Mammary epithelial cell (primary cell): ENCODE measurements at regions of chr2 and their contacts with region 1.

Region 1: GRCh38 chr2:230160112-230160660 is 59.6 kb downstream of the SP110 start:
- DNase-seq: peak; percentile 37
- H3K4me3 ChIP-seq: no peak overlapping the region
- H3K27ac ChIP-seq: no peak overlapping the region
- H3K4me1 ChIP-seq: no peaks in the 10 kb centered on the region
- H3K27me3 ChIP-seq: no peaks in the 10 kb centered on the region
- CTCF ChIP-seq: peak; percentile 65 to 75

Region 2: DNA sequence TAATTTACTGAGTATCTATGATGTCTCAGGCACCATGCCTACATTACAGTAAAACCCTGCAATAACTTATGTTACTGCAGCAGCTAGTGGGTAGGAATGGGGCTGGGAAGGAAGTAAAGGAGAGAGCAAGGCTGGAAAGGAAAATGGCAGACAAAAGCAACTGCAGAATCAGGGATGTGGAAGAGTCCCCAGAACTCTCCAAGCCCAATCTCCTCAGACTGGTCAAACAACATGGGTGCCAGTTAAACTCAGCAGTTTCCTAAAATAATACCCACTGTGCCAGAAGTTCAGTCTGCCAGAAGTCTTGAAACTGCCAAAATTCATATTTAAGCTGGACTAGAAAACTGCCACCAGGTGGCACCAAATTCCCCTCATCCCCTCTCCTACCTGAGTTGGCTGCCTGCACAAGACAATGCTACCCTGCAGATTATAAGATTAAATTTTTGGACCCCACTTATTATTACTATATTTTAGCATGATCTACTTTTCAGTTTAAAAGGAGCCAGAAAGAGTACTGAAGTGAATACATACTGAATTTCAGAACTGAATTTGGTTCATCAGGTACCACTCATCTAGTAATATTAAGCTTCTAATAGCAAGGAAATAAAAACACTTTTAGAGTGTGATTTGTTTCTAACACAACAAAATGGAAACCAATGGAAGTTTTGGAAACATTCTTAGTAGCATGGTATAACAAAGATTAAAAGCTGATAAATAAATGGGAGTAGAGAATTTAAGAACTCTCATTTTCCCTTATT is 359.0 kb before region 1 on chr2:
- CTCF ChIA-PET with region 1: no interaction called
- dilution Hi-C with region 1: no loop called
- in situ Hi-C with region 1: no loop called
- intact Hi-C with region 1: loop called (anchors 5 kb)
- DNase-seq: peak; percentile 35
- H3K4me3 ChIP-seq: no peak overlapping the region
- H3K27ac ChIP-seq: peak overlapping the region; percentile 47
- H3K4me1 ChIP-seq: peaks cover 10% of the 10 kb centered on the region
- H3K27me3 ChIP-seq: no peaks in the 10 kb centered on the region
- CTCF ChIP-seq: peak; percentile 78 to 79

Region 3: GRCh38 chr2:230018153-230018552 is 142.0 kb before region 1 on chr2:
- CTCF ChIA-PET with region 1: interaction called, 22 read pairs
- dilution Hi-C with region 1: no loop called
- in situ Hi-C with region 1: no loop called
- intact Hi-C with region 1: no loop called
- DNase-seq: peak; percentile 72
- H3K4me3 ChIP-seq: no peak overlapping the region
- H3K27ac ChIP-seq: no peak overlapping the region
- H3K4me1 ChIP-seq: no peaks in the 10 kb centered on the region
- H3K27me3 ChIP-seq: no peaks in the 10 kb centered on the region
- CTCF ChIP-seq: no peak

Region 4: DNA sequence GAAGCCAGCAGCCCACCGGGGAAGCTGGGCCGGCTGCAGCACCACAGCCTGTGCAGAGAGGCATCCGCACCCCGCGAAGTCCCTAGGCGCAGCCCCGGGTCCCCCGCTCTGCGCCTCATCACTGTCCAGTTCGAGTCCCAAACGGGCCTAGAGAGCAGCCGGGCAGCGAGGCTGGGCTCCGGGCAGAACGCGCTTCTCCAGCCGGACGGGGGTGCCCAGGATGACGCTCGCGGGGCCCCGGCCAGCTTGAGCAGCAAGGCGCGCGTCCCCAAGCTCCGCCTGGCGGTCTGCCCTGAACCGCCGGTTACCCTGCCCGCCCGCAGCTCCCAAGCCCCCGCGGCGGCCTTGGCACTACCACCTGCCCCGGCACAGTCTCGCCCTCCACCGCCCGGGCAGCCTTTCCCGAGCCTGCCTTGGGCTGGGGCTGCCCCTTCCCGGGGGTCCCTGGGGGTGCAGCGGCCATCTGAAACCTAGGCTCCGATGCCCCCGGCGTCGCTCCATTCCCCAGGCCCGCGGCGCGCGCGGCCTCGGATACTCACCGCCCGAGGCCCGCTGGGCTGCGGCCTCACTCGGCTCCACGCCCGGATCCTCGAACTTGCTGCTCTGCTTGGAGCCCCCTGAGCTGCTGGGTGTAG is 92.1 kb before region 1 on chr2:
- CTCF ChIA-PET with region 1: interaction called, 17 read pairs
- dilution Hi-C with region 1: no loop called
- in situ Hi-C with region 1: no loop called
- intact Hi-C with region 1: loop called (anchors 1 kb)
- DNase-seq: peak; percentile 34
- H3K4me3 ChIP-seq: peak overlapping the region; percentile 38 to 50 (median 50)
- H3K27ac ChIP-seq: no peak overlapping the region
- H3K4me1 ChIP-seq: peaks cover 21% of the 10 kb centered on the region
- H3K27me3 ChIP-seq: no peaks in the 10 kb centered on the region
- CTCF ChIP-seq: peak in 1 of 2 donors; percentile 10

Region 5: DNA sequence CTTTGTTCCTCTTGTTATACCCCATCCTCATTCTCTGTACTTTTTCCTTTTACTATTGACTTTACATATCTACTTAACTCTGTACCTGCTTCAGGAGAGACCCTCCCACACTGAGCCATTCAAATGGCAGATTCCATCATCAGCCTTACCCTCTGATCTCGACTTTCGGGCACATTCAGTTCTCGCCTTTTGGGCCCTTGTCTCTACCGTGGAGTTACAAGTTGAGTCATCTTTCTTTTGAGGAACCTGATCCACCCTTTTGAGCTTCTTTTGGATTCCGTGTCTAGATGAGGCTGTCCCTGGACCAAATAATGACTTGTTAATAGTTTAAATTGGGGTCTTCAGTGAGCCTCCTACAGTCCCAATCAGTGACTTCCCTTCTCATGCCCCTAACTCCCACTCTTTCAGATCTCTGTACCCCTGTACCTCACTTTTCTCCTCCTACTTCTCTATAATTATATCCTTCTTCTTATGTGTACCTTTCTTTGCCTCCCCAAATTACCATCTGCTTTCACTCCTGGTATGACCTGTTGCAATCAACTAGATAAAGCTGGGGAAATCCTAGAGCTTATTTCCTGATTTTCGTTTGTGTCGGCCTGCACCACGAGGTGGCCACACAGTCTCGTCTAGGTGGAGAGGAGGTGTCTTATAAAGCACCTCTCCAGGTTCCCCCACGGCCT is 42.4 kb after region 1 on chr2:
- CTCF ChIA-PET with region 1: interaction called, 16 read pairs
- dilution Hi-C with region 1: no loop called
- in situ Hi-C with region 1: no loop called
- intact Hi-C with region 1: no loop called
- DNase-seq: no peak
- H3K4me3 ChIP-seq: no peak overlapping the region
- H3K27ac ChIP-seq: no peak overlapping the region
- H3K4me1 ChIP-seq: no peaks in the 10 kb centered on the region
- H3K27me3 ChIP-seq: no peaks in the 10 kb centered on the region
- CTCF ChIP-seq: no peak

Region 6: GRCh38 chr2:231946241-231946814 is 1786.1 kb after region 1 on chr2:
- CTCF ChIA-PET with region 1: no interaction called
- dilution Hi-C with region 1: no loop called
- in situ Hi-C with region 1: no loop called
- intact Hi-C with region 1: no loop called
- DNase-seq: no peak
- H3K4me3 ChIP-seq: no peak overlapping the region
- H3K27ac ChIP-seq: no peak overlapping the region
- H3K4me1 ChIP-seq: no peaks in the 10 kb centered on the region
- H3K27me3 ChIP-seq: no peaks in the 10 kb centered on the region
- CTCF ChIP-seq: no peak